Panc1 (cell line): ENCODE measurements at regions of chr2 and their contacts with region 1.

Region 1: GRCh38 chr2:47091118-47091517 is 64.0 kb downstream of the STPG4 start:
- DNase-seq: no peak
- ATAC-seq: no peak
- H3K4me3 ChIP-seq: no peak overlapping the region
- H3K27ac ChIP-seq: no peak overlapping the region
- H3K4me1 ChIP-seq: no peaks in the 10 kb centered on the region
- H3K27me3 ChIP-seq: no peaks in the 10 kb centered on the region
- CTCF ChIP-seq: no peak

Region 2: GRCh38 chr2:47076586-47077441 is 14.3 kb before region 1 on chr2:
- CTCF ChIA-PET with region 1: interaction called, 3 read pairs
- POLR2A ChIA-PET with region 1: interaction called, 11 read pairs
- in situ Hi-C with region 1: no loop called
- intact Hi-C with region 1: no loop called
- DNase-seq: peak; percentile 69
- ATAC-seq: peak; percentile 88
- H3K4me3 ChIP-seq: no peak overlapping the region
- H3K27ac ChIP-seq: peak overlapping the region; percentile 68
- H3K4me1 ChIP-seq: peaks cover 35% of the 10 kb centered on the region
- H3K27me3 ChIP-seq: no peaks in the 10 kb centered on the region
- CTCF ChIP-seq: no peak

Region 3: DNA sequence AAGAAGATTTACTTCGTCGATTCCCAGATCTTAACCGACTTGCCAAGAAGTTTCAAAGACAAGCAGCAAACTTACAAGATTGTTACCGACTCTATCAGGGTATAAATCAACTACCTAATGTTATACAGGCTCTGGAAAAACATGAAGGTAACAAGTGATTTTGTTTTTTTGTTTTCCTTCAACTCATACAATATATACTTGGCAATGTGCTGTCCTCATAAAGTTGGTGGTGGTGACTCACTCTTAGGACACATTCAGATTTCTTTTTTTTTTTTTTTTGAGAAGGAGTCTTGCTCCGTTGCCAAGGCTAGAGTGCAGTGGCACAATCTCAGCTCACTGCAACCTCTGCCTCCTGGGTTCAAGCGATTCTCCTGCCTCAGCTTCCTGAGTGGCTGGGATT is 338.7 kb after region 1 on chr2:
- CTCF ChIA-PET with region 1: no interaction called
- POLR2A ChIA-PET with region 1: interaction called, 18 read pairs
- in situ Hi-C with region 1: no loop called
- intact Hi-C with region 1: no loop called
- DNase-seq: no peak
- ATAC-seq: peak; percentile 84
- H3K4me3 ChIP-seq: no peak overlapping the region
- H3K27ac ChIP-seq: no peak overlapping the region
- H3K4me1 ChIP-seq: peaks cover 14% of the 10 kb centered on the region; the same call in 1 of the 2 replicates
- H3K27me3 ChIP-seq: no peaks in the 10 kb centered on the region
- CTCF ChIP-seq: no peak